Activated B cell treated with CpG ODN at 0.5 μM for 24 hours (primary cell): ENCODE measurements at regions of chr17 and their contacts with region 1.

Region 1: GRCh38 chr17:5031365-5032082 is 3.7 kb downstream of the SLC52A1 start:
- DNase-seq: peak; percentile 75
- ATAC-seq: peak; percentile 87
- H3K4me3 Mint-ChIP-seq: peak overlapping the region; percentile 82
- H3K27ac Mint-ChIP-seq: peak overlapping the region; percentile 71
- H3K4me1 Mint-ChIP-seq: peaks cover 14% of the 10 kb centered on the region
- H3K27me3 Mint-ChIP-seq: peaks cover 7% of the 10 kb centered on the region
- CTCF ChIP-seq: peak; percentile 47

Region 2: GRCh38 chr17:4986951-4987766 is 44.4 kb before region 1 on chr17 and contains the start of gene CAMTA2:
- CTCF ChIA-PET with region 1: interaction called, 3 read pairs
- POLR2A ChIA-PET with region 1: no interaction called
- intact Hi-C with region 1: loop called (anchors 2 kb)
- DNase-seq: peak; percentile 88
- ATAC-seq: peak; percentile 80
- H3K4me3 Mint-ChIP-seq: peak within 1 kb of the TSS; percentile 92
- H3K27ac Mint-ChIP-seq: peak within 1 kb of the TSS; percentile 93
- H3K4me1 Mint-ChIP-seq: peaks cover 32% of the 10 kb centered on the region
- H3K27me3 Mint-ChIP-seq: no peaks in the 10 kb centered on the region
- CTCF ChIP-seq: no peak
- total RNA-seq, gene CAMTA2: 45.9 and 57.9 TPM in 2 replicates

Region 3: DNA sequence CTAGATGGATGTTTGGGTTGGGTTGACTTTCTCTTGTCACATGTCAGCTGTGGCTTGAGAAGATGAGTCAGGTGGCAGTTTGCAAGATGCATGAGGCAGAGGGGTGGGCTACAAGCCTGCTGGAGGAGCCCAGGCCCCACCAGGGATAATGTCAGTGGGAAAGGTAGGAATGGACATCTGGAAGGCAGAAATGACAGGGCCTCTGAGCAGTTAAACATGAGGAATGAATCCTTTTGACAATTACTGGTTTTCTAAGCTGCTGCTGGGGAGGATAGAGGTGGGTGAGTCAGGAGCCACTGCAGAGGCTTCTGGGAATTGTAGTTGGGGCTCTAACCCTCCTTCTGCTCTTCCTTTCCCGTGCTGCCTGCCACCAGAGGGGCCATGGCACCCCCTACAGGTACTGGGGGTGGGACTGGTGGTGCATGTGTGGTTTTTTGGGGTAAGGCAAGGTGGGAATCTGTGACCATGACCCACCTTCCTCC is 12.0 kb before region 1 on chr17:
- CTCF ChIA-PET with region 1: interaction called, 4 read pairs
- POLR2A ChIA-PET with region 1: interaction called, 6 read pairs
- intact Hi-C with region 1: loop called (anchors 1 kb)
- DNase-seq: peak; percentile 31
- ATAC-seq: peak; percentile 49
- H3K4me3 Mint-ChIP-seq: no peak overlapping the region
- H3K27ac Mint-ChIP-seq: peak overlapping the region; percentile 32
- H3K4me1 Mint-ChIP-seq: peaks cover 28% of the 10 kb centered on the region
- H3K27me3 Mint-ChIP-seq: no peaks in the 10 kb centered on the region
- CTCF ChIP-seq: no peak

Region 4: GRCh38 chr17:5055543-5055942 is 24.0 kb after region 1 on chr17:
- CTCF ChIA-PET with region 1: interaction called, 58 read pairs
- POLR2A ChIA-PET with region 1: interaction called, 3 read pairs
- intact Hi-C with region 1: no loop called
- DNase-seq: no peak
- ATAC-seq: no peak
- H3K4me3 Mint-ChIP-seq: no peak overlapping the region
- H3K27ac Mint-ChIP-seq: no peak overlapping the region
- H3K4me1 Mint-ChIP-seq: peaks cover 19% of the 10 kb centered on the region
- H3K27me3 Mint-ChIP-seq: no peaks in the 10 kb centered on the region
- CTCF ChIP-seq: no peak

Region 5: DNA sequence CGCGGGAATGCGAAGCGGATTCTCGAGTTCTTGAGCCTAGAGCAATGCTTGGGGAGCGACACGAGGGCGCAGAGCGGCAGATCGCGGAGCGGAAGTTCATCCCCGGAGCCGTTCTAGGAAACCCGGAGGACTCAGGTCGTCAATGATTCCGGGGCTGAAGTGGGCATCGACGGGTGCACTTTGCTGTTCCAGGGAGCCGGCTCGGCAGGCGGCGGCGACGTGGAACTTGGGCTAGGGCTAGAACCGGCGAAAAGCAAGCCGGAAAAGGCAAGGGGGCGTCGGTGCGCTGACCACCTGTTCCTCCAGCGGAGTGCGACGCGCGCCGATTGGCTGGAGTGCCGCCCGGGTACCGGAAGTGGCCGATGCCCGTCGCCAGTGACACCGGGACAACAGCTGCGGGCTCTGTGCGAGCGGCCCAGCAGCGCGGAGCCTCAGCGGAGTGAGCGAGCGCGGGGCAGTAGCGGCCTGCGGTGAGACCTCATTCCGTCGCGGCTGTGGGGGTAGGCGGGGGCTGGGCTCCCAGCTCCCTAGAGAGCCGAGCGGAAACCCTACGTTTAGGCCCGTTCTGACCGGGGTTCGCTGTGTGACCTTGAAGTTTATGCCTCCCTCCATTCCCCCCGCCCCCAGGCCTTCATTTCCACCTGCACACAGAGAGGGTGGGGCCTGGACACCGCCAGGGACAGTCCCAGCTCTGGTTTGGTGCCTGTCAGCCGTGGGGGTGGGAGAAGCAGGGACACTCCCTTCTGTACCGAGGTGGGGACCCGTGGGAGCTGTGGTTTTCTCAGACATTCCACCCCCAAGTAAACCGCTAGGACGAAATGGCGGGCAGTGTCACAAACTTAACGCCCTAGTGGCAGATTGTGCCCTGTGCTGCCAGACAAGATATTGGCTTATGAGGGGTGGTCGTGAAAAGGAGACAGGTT is 46.8 kb after region 1 on chr17 and contains the start of gene ZFP3:
- CTCF ChIA-PET with region 1: interaction called, 3 read pairs
- POLR2A ChIA-PET with region 1: interaction called, 4 read pairs
- intact Hi-C with region 1: loop called (anchors 1 kb)
- DNase-seq: peak; percentile 80
- ATAC-seq: peak; percentile 88
- H3K4me3 Mint-ChIP-seq: peak within 1 kb of the TSS; percentile 83
- H3K27ac Mint-ChIP-seq: peak within 1 kb of the TSS; percentile 96
- H3K4me1 Mint-ChIP-seq: peaks cover 31% of the 10 kb centered on the region
- H3K27me3 Mint-ChIP-seq: no peaks in the 10 kb centered on the region
- CTCF ChIP-seq: no peak
- total RNA-seq, gene ZFP3: 10.1 and 11.5 TPM in 2 replicates

Region 6: GRCh38 chr17:5237541-5238016 is 206.1 kb after region 1 on chr17:
- CTCF ChIA-PET with region 1: no interaction called
- POLR2A ChIA-PET with region 1: no interaction called
- intact Hi-C with region 1: loop called (anchors 5 kb)
- DNase-seq: no peak
- ATAC-seq: peak; percentile 18
- H3K4me3 Mint-ChIP-seq: peak overlapping the region; percentile 36
- H3K27ac Mint-ChIP-seq: peak overlapping the region; percentile 98
- H3K4me1 Mint-ChIP-seq: peaks cover 78% of the 10 kb centered on the region
- H3K27me3 Mint-ChIP-seq: no peaks in the 10 kb centered on the region
- CTCF ChIP-seq: no peak